ENCODE measurements at regions of chrX and their contacts with region 1.

Region 1: GRCh38 chrX:66750769-66751764 is 112.2 kb upstream of the EDA2R start:
- DNase-seq: no peak
- ATAC-seq: no peak

Region 2: DNA sequence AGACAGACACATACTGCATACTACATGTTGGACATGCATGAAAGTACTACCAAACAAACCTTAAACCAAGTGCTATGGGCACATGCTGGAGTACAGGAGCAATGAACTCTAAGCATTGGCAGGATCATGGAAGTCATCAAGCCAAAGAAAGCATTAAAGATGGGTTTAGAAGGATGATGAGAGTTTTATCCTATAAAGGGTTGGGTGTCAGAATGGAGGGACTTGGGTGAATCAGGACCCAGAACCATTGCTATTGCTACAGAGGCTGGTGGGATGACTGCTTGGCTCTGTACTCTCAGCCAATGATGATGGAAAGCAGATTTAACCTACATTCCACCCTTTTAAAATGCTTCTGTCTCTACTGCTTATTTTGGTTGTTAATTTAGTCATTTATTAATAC is 121.7 kb after region 1 on chrX:
- intact Hi-C with region 1: no loop called
- DNase-seq: no peak
- ATAC-seq: no peak

Region 3: GRCh38 chrX:66914080-66914479 is 163.0 kb after region 1 on chrX:
- intact Hi-C with region 1: no loop called
- DNase-seq: no peak
- ATAC-seq: no peak

Region 4: DNA sequence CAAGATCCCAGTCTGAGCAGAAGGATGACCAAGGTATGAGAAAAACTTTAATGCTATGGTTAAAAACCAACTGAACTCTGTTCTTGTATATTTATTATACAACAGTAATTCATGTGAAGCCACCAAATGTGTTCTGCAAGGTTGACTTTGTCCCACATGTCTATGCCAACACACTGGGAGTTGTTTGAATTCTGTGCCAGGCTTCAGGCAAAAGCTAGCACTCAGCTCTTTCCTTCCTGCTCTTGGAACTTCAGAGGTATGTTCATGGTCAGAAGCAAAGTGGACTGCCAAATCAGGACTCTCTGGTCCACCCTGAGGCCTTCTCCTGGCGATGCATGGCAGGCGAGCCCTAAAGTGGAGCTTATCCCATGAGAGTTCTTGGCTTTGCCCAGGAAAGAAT is 587.2 kb after region 1 on chrX:
- intact Hi-C with region 1: loop called (anchors 10 kb)
- DNase-seq: no peak
- ATAC-seq: no peak

Measured in left ventricle myocardium superior (tissue), 1 donor.